GM18951 (cell line): ENCODE measurements at regions of chr11 and their contacts with region 1.

Region 1: GRCh38 chr11:12888525-12889158 is 120.5 kb upstream of the RASSF10 start:
- POLR2A ChIP-seq: no peak

Region 2: DNA sequence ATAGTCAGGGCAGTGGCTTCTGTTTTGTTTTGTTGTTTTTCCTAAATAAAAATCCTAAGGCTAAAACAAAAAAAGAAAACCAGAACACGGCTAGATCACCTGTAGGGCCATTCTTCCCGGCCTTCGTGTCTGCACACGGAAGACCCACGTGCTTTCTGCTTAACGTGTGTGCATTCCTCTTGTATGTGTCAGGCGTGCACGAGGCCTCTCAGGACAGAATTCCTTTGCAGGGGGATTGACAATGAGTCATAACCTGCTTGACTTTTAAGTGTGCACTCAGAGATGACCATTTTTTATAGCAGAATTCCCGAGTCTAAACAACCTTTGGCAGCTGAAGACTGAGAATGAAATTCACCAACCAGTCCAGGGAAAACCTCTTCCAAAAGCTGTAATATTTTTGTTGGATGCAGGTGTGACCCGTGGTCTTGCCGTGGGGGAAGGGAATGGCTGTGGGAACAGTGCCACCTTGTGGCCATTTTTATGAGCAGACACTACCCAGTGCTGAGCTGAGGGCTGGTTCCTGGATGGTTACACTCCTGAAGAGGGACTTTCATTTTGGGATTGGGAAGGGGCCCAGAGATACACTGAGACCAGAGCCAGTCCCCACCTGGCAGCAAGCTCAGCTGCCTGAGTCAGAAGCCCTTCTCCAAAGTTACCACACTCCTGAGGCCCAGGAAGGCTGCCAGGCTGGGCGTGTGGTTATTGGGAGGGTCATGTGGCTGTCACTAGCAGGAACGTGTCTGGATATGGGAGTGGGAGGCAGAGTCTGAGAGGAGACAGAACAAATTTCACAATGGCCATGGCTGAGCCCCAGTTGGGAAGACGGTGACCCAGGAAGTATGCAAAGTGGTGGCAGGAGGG is 844.5 kb before region 1 on chr11:
- in situ Hi-C with region 1: loop called (anchors 25 kb)
- POLR2A ChIP-seq: no peak

Region 3: DNA sequence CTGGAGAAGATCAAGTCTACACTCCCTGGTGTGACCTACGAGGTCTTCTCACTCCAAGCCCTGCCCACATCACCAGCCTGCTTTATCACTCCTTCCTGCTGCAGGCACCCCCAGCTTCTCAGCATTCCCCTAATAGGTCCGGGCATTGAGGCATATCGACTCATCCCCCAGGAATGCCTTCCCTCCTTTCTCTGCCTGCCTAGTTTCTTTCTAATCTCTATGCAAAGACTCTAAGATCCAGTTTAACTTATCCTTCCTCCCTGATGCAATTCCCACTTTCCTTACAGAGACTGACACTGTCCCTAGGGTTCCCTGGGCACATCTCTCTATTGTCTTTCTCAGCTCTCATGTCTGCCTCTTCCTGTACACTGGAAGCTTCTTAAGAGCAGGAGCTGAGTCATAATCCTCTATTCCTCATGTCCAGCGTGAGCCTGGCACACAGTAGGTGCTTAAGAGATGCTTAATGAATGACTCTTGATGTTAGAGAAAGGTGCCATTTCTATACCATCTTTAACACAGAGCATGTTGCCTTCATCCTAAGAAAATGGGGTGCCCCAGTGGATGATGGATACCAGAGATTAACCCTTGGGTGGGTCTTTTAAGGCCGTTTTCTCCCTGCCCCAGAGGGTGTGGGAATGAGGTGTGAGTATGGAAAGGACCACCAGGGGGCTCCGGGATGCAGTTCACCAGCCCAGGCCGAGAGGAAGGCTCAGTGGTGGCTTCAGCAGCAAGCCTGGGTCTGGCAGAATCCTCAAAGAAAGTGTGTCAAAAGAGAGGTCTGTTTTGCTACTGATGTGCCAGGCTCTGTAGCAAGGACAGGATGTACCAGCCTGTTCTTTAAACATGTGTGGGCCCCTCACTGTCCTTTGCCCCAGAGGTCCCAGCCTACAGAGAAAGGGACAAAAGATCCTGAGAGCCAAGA is 476.6 kb before region 1 on chr11:
- in situ Hi-C with region 1: no loop called
- POLR2A ChIP-seq: no peak

Region 4: GRCh38 chr11:12599408-12600143 is 289.1 kb before region 1 on chr11:
- in situ Hi-C with region 1: loop called (anchors 10 kb)
- POLR2A ChIP-seq: no peak